ENCODE measurements at regions of chr19 and their contacts with region 1.

Region 1: DNA sequence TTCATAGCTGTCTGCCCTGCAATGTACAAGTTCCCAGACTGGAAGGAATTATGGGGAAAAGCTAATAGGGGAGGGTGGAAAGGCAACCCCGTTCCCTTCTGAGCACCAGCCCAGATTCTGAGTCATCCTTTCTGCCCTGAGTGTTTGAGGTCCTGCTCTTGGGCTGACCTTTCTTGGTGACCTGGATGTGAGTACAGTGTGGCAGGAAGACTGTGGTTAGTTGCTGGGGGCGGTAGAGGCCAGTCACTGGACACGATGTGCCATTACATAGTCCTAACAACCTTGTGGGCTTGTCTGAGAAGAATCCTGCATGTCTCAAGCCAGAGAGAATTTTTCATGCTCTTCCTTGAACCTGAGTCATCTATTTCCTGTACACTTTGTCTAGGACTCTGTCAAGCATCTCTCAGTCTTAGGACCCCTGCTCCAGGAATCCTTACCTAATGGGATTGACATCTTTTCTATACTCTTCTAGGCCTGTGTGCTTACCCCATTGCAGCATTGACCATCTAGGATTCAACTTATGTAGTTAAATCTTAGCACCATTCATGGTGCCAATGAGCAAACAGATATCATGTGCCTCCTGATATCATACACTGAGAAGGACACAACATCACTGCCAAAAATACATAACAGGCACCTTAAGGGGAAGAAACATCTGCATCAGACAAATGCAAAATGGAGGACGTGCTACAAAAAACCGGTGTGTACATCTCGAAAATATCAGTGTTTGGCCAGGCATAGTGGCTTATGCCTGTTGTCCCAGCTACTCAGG is 8.1 kb upstream of the ANGPTL4 start:
- DNase-seq: no peak
- ATAC-seq: peak; percentile 53 to 83

Region 2: GRCh38 chr19:8302357-8302691 is 53.5 kb before region 1 on chr19:
- intact Hi-C with region 1: no loop called
- DNase-seq: peak; percentile 51
- ATAC-seq: peak; percentile 66 to 73

Region 3: DNA sequence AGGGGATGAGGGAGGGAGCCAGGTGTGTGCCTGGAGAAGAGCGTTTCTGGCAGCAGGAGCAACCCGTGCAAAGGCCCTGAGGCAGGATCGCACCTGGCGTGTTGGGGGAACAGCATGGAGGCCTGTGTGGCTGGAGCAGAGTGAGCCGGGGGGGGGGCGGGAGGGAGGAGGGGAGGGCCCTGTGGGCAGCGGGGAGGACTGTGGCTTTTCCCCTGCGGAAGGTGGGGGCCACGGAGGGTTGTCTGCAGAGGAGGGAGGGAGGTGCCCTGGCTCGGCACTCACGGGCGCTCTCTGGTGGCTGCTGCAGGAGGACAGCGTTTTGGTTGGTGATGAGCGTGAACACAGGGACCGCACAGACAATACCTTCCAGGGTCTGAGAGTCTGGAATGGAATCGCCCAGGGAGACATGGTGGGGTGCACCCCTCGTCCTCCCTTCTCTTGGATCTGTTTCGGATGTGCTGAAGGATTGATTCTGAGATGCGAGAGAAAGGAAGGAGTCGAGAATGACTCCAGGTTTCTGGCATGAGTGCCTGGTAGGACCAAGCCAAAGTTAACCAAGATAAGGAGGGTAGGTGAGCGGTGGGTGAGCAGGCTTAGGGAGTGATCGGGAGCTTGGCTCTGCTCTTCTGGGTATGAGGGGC is 40.9 kb after region 1 on chr19:
- intact Hi-C with region 1: loop called (anchors 2 to 5 kb)
- DNase-seq: peak; percentile 86
- ATAC-seq: peak; percentile 47 to 61

Region 4: GRCh38 chr19:8451885-8452284 is 96.1 kb after region 1 on chr19:
- intact Hi-C with region 1: loop called in 1 of 2 experiments (anchors 10 kb)
- DNase-seq: no peak
- ATAC-seq: peak in 1 of 2 donors; percentile 49

Region 5: DNA sequence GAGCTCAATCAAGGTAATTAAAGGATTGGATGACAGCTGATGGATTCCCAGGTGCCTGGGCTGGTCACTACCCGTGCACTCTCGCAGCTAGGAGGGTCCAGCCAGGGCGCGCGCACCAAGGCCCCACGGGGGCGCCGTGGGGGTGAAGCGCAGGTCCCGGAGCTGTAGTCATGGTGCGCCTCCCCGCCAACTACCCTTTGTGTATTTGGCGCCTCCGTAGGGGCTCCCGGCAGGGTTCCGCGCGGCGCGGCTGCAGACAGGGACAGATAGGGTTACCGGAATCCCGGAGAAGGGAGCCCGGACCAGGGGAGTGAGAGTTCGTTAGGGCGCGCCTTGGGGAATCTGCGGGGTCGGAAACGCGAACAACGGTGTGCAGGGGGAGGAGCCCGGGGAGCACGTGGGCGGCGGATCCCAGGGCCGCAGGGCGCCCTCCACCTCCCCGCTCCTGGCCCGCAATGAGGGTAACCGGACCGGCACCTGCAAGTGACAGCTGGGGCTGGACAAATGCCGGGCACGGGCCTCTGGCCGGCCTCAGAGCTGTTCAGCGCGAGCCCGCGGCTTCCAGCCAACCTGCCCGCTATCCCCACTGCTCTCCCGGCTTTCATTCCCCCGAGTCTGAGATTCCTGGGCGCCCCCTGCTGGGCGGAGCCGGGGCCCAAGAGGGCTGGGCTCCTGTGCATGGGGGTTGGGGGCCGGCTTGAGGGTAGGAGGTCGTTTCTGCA is 150.0 kb after region 1 on chr19:
- intact Hi-C with region 1: loop called (anchors 2 to 10 kb)
- DNase-seq: peak; percentile 81
- ATAC-seq: peak; percentile 87 to 91

Region 6: DNA sequence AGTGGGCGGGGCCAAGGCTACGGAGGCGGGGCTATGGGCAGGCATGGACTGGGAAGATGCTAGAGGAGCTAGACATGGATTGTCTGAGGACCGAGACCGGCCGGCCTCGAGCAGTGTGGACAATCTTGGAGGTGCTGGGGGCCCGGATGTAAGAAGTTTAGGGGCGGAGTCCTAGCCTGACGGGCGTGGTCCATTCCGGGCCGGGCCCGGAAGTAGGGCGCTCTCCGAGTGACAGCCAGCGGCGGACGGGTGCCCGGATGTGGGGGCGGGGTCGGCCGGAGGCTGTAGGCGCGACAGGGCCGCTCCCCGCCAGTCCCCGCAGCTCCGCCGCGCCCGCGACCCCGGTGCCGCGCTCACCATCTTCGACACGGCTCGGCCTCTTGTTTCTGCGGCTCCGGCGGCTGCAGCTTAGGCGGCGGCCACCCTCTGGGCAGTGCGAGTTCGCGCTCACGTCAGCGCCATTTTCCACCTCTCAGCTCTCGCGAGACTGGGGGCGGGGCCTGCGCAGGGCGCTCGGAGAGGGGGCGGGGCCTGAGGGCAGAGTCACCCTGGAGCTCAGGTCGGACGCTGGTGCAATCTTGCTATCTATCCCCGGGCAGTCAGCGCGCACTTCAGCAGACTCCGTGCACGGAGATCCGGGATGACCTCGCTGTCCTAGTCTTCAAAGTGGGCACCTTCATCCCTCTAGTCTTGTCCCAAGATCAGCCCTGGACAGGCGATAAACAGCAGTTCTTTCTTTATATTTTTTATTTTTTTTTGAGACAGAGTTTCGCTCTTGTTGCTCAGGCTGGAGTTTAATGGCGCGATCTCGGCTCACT is 158.1 kb after region 1 on chr19 and contains the start of gene ZNF414:
- intact Hi-C with region 1: loop called (anchors 2 to 10 kb)
- DNase-seq: peak; percentile 98
- ATAC-seq: peak; percentile 95 to 96
- total RNA-seq, gene ZNF414: 13.6 to 16.6 TPM

Region 7: DNA sequence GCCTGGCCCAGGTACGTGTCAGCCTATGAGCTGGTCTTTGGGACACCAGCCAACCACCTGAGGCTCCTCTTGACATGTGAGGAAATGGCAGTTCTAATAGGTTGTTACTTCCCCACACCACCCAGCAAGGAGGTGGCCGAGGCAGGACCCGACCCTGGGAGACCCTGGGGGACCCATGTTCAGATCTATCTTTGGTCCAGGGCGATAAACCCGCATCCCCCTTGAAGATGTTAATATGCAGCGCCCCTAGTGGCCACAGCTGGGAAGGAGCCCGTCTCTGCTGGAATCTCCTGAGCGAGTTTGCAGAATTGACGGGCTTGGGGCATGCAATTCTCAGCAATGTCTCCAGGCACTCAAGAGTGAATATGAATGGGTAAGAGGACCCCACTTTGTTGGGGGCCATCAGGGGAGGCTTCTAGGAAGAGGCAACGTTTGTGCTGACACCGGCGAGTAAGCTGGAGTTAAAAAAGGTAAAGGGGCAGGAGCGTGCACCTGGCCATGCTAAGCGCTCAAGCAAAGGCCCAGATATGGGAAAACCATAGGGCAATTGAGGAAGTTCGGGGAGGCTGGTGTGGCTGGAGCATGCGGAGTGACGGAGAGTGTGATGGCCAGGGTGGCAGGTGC is 222.9 kb after region 1 on chr19:
- intact Hi-C with region 1: loop called in 1 of 2 experiments (anchors 5 kb)
- DNase-seq: peak; percentile 77
- ATAC-seq: peak; percentile 24 to 26

Measured in left cardiac atrium (tissue), 4 donors.